ENCODE measurements at regions of chr12 and their contacts with region 1.

Region 1: DNA sequence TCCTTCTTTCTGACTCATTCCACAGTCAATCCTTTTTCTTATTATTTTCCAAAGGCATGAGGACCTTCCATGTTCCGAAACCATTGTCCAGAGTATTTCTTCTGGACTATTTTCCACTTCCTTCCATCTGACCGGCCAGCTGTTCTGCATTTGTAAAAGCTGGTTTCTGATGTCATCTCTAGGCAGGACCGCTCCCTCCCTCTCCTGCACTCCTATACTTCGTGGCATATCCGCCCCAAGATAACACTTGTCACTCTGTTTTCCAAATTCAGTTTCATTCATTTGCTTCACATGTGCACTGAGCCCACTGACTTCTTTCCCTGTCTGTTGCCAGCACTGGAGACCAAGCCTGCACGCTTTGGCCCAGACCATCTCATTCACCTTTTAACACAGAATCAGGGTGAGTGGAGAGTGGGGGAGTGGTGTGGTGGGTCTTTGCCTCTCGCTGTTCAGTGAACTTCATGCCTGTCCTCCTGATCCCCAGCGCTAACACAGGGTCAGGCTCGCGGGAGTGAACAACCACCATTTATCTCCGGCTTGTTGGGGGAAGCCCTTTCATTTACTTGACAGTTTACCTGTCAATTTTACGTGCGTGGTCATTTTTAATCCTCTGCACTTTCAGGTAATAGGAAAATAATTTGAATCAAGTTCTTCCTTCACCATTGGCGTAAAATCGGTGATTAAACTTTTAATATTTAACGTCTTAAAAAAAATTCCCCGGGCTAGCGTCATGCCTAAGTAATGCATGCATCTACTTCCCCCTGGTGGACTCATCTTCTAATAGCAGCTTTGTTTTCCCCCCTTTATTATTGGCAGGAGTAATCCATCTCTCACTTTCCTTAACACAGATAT is 52.5 kb downstream of the C12orf75 start:
- DNase-seq: peak; percentile 21
- H3K4me3 ChIP-seq: peak overlapping the region; percentile 1; the same call in 1 of the 2 replicates
- CTCF ChIP-seq: peak; percentile 47

Region 2: GRCh38 chr12:105013892-105014291 is 369.1 kb before region 1 on chr12:
- CTCF ChIA-PET with region 1: no interaction called
- POLR2A ChIA-PET with region 1: no interaction called
- DNase-seq: peak; percentile 12
- H3K4me3 ChIP-seq: no peak overlapping the region
- CTCF ChIP-seq: no peak

Region 3: GRCh38 chr12:105204916-105205315 is 178.1 kb before region 1 on chr12:
- CTCF ChIA-PET with region 1: interaction called, 14 read pairs
- POLR2A ChIA-PET with region 1: interaction called, 4 read pairs
- DNase-seq: peak; percentile 49
- H3K4me3 ChIP-seq: no peak overlapping the region
- CTCF ChIP-seq: no peak

Region 4: DNA sequence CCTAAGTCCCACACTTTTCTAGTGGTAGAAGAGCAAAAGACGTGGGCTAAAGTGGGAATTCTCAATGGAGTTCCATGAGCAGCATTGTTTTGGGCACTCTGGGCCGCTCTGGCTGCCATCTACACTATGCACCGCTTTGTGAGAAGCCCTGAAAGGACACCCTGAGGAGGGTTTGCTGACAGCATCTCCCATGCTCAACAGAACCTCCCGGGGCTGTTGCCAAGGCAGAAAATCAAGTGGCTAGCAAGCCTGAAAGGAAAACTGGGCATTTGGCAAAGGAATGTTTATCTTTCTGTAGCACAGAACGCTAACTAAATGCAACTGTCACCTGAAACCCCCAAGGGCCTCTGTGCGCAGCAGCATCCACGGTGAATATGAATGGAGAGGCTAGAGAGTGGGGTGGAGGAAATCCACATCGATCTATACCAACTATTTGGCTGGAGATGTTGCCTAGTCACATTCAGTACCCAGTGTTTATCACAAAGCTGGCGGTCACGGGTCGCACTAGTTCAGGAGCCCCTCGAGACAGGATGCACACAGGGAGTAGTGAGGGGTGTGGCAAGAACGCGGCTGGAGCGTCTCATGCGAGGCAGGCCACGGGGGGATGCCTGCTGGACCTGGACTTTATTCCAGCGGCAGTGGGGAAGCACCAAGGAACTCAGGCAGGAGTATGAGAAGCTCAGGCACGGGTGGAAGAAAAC is 161.3 kb before region 1 on chr12:
- CTCF ChIA-PET with region 1: interaction called, 11 read pairs
- POLR2A ChIA-PET with region 1: no interaction called
- DNase-seq: no peak
- H3K4me3 ChIP-seq: no peak overlapping the region
- CTCF ChIP-seq: no peak

Region 5: GRCh38 chr12:105278043-105278697 is 104.8 kb before region 1 on chr12:
- CTCF ChIA-PET with region 1: interaction called, 12 read pairs
- POLR2A ChIA-PET with region 1: no interaction called
- DNase-seq: no peak
- H3K4me3 ChIP-seq: no peak overlapping the region
- CTCF ChIP-seq: peak; percentile 21

Region 6: DNA sequence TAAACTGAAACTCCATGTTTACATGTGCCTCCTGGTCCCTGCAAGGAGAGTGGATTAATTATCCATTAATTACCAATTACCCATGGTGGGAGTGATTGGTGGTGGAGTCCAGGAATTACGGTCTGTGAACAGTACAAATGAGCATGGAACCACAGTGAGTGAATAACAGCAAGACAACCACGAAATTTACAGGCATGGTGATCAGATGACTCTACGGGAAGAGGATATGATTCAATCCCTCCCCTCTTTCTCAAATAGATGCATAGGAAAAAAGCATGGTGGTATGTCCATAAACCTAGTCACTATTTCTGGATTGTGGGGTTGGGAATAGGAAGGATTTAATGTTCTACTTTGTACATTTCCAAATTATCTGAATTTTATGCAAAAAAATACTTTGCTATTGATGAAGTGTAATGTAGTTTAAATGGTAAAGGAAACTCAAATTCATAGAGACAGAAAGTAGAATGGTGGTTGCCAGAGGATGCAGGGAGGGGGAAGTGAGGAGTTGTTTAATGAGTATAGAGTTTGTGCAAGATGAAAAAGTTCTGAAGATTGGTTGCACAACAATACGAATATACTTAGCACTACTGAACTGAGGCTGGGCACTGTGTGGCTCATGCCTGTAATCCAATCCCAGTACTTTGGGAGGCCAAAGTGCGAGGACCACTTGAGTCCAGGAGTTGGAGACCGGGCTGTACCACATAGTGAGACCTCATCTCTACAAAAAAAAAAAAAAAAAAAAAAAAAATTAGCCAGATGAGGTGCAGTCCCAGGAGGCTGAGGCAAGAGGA is 93.7 kb before region 1 on chr12:
- CTCF ChIA-PET with region 1: no interaction called
- POLR2A ChIA-PET with region 1: no interaction called
- DNase-seq: no peak
- H3K4me3 ChIP-seq: no peak overlapping the region
- CTCF ChIP-seq: no peak

Region 7: GRCh38 chr12:105369014-105369413 is 14.0 kb before region 1 on chr12:
- CTCF ChIA-PET with region 1: interaction called, 15 read pairs
- POLR2A ChIA-PET with region 1: no interaction called
- DNase-seq: peak; percentile 53
- H3K4me3 ChIP-seq: no peak overlapping the region
- CTCF ChIP-seq: peak; percentile 28

Region 8: GRCh38 chr12:105393587-105393986 is 10.6 kb after region 1 on chr12:
- CTCF ChIA-PET with region 1: interaction called, 10 read pairs
- POLR2A ChIA-PET with region 1: no interaction called
- DNase-seq: no peak
- H3K4me3 ChIP-seq: no peak overlapping the region
- CTCF ChIP-seq: no peak